Activated CD4-positive, alpha-beta T cell treated with anti-CD3 and anti-CD28 coated beads for 36 hours (primary cell): ENCODE measurements at regions of chr16 and their contacts with region 1.

Region 1: GRCh38 chr16:788394-789126 is at the start of gene CHTF18:
- DNase-seq: peak; percentile 97
- ATAC-seq: peak; percentile 98
- H3K4me3 Mint-ChIP-seq: peak within 1 kb of the TSS; percentile 88
- H3K27ac Mint-ChIP-seq: peak within 1 kb of the TSS; percentile 78
- H3K4me1 Mint-ChIP-seq: peaks cover 13% of the 10 kb centered on the region
- H3K27me3 Mint-ChIP-seq: no peaks in the 10 kb centered on the region
- total RNA-seq, gene CHTF18: 82.2 to 105 TPM

Region 2: DNA sequence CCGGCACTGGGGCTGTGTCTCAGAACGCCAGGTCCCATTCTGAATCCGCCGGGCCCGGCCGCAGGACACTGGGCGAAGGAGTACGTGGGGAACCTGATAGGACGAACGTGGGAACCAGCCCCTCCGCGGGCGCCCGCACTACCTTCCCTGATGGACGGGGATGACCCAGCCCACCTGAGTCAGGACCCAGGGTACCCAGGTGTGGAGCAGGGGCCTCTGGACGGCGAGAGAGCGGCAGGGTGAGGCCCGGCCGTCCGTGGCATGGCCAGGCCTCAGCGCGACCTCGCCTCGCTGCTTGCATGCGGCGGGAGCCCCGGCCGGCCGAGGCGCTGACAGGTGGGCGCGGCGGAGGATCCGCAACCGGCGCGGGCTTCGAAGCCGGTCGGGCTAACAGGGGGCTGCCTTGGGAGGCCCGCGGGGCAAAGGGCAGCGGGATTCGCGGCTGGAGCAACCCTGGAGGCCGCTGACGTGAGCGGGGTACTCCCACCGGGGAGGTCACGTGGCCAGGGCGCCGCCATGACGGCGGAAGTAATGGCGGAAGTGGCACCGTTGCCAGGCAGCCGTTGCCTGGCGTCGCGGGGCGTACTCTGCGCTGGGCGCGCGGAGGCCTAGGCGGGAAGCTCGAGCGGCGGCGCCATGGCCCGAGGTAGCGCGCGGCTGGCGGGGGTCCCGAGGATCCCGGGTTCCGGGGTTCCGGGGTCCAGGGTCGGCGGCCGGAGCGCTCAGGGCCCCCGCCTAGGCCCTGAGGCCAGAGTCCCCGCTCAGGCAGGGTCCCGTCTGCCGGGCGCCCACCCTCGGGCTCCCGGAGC is 139.6 kb before region 1 on chr16 and contains the start of gene WDR90:
- CTCF ChIA-PET with region 1: no interaction called
- POLR2A ChIA-PET with region 1: no interaction called
- intact Hi-C with region 1: loop called in 1 of 2 experiments (anchors 1 kb)
- DNase-seq: peak; percentile 96
- ATAC-seq: peak; percentile 92
- H3K4me3 Mint-ChIP-seq: peak within 1 kb of the TSS; percentile 81
- H3K27ac Mint-ChIP-seq: peak within 1 kb of the TSS; percentile 73
- H3K4me1 Mint-ChIP-seq: peaks cover 15% of the 10 kb centered on the region
- H3K27me3 Mint-ChIP-seq: no peaks in the 10 kb centered on the region
- total RNA-seq, gene WDR90: 43.6 to 55.9 TPM

Region 3: DNA sequence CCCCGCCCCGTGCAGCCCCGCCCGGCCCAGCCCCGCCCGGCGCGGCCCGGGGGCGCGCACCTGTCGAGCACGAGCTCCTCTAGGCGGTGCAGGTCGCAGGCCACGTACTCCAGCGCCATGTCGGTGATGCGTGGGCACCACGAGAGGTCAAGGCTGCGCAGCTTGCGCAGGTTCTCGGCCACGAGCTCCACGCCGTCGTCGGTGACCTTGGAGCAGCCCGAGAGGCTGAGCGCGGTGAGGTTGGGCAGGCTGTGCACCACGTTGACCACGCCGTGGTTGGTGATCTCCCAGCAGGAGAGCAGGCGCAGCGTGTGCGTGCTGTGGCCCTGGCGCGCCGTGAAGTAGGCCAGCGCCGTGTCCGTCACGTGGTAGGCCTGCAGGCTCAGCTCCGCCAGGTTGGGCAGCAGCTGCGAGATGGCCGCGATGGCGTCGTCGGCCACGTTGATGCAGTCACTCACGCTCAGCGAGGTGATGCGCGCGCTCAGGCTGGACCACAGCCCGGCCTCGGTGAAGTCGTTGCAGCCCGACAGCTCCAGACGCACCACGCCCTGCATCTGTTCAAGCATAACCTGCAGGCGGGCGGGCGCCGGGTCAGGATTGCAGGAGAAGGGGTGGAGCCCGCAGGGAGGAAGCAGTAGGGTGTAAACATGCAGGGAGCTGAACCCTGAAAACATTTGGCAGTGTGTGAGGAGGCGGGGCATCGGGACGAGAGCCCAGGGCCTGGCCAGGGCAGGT is 93.0 kb before region 1 on chr16:
- CTCF ChIA-PET with region 1: no interaction called
- POLR2A ChIA-PET with region 1: no interaction called
- intact Hi-C with region 1: loop called in 1 of 2 experiments (anchors 5 kb)
- DNase-seq: peak; percentile 89
- ATAC-seq: peak; percentile 82
- H3K4me3 Mint-ChIP-seq: peak overlapping the region; percentile 77
- H3K27ac Mint-ChIP-seq: peak overlapping the region; percentile 80
- H3K4me1 Mint-ChIP-seq: peaks cover 13% of the 10 kb centered on the region
- H3K27me3 Mint-ChIP-seq: no peaks in the 10 kb centered on the region

Region 4: DNA sequence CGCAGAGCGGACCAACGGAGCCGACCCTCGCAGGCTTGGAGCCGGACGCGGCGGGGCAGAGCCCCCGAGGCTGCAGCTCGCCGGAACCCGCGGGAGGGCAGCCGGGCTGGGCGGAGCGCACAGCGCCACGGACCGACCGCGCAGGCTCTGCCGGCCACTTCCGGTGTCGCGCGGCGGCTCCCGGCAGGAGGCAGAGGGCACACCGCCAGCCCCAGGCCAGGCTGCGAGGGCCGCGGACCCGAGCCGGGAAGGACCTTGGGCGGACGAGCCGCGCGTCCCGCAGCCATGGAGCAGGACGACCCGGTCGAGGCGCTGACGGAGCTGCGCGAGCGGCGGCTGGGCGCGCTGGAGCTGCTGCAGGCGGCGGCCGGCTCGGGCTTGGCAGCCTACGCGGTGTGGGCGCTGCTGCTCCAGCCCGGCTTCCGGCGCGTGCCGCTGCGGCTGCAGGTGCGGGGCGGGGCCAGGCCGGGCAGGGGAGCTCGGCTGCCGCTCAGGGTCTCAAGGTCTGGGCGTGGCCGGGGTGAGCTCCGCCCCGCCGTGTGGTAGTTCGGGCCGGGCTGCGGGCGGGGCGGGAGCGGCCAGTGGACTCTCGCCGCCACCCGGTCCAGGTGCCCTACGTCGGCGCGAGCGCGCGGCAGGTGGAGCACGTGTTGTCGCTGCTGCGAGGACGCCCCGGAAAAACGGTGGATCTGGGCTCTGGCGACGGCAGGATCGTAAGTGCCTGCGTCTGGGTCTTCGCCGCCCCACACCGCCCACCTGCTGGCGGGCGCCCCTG is 67.4 kb before region 1 on chr16 and contains the start of gene ANTKMT:
- CTCF ChIA-PET with region 1: interaction called, 55 read pairs
- POLR2A ChIA-PET with region 1: interaction called, 3 read pairs
- intact Hi-C with region 1: loop called in 1 of 2 experiments (anchors 2 kb)
- DNase-seq: peak; percentile 86
- ATAC-seq: peak; percentile 72
- H3K4me3 Mint-ChIP-seq: peak within 1 kb of the TSS; percentile 76
- H3K27ac Mint-ChIP-seq: peak within 1 kb of the TSS; percentile 78
- H3K4me1 Mint-ChIP-seq: peaks cover 16% of the 10 kb centered on the region
- H3K27me3 Mint-ChIP-seq: peaks cover 3% of the 10 kb centered on the region
- total RNA-seq, gene ANTKMT: 13.3 to 27.0 TPM

Region 5: DNA sequence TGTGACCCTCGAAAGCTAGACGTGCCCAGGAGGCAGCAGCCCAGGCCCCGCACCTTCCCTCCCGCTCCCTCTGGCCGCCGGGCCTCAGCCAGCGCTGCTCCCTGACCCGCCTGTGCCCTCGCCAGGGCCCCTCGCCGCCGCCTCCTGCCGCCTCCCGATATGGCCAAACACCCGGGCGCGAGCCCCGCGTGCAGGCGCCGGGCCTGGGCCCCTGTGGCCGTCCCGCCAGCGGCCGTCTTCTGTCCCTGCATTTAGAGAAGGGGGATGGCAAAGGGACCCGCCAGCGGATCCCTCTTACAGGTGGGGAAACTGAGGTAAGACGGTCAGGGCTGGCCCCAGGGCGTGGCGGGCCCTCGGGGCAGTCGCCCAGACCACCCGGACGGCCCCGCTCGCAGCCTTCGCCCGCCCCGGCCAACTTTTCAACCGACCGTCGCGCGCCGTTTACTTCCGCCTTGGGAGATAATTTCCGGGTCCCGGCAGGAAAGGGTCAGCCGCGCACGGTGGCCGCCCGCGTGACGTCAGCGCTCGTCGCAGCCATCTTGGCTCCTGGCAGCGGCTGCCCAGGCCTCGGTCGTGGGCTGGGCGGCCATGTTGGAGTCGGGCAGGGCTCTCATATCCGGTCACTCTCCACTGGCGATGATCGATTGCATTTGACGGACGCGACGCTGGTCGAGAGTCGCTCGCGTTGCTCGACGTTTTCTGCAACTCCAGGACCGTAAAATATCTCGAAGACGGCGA is 19.0 kb after region 1 on chr16:
- CTCF ChIA-PET with region 1: no interaction called
- POLR2A ChIA-PET with region 1: interaction called, 4 read pairs
- intact Hi-C with region 1: loop called in 1 of 2 experiments (anchors 1 kb)
- DNase-seq: peak; percentile 93
- ATAC-seq: peak; percentile 98
- H3K4me3 Mint-ChIP-seq: peak overlapping the region; percentile 96
- H3K27ac Mint-ChIP-seq: peak overlapping the region; percentile 95
- H3K4me1 Mint-ChIP-seq: peaks cover 8% of the 10 kb centered on the region
- H3K27me3 Mint-ChIP-seq: peaks cover 4% of the 10 kb centered on the region